Psoas muscle (tissue), 8 donors: ENCODE measurements at regions of chr2 and their contacts with region 1.

Region 1: GRCh38 chr2:45169339-45170190 is 160.3 kb upstream of the SIX2 start:
- DNase-seq: peak; percentile 45 to 62
- ATAC-seq: peak; percentile 53 to 70 (median 57)
- H3K4me3 ChIP-seq: peak overlapping the region; percentile 82
- H3K27ac ChIP-seq: peak overlapping the region; percentile 72
- H3K4me1 ChIP-seq: peaks cover 11% of the 10 kb centered on the region
- H3K27me3 ChIP-seq: peaks cover 0 to 7% (median 0%) of the 10 kb centered on the region in 3 donors
- CTCF ChIP-seq: no peak

Region 2: GRCh38 chr2:44981136-44982108 is 188.1 kb before region 1 on chr2:
- intact Hi-C with region 1: loop called in 1 of 2 experiments (anchors 10 kb)
- DNase-seq: peak; percentile 71 to 84
- ATAC-seq: peak; percentile 84 to 99 (median 90)
- H3K4me3 ChIP-seq: no peak overlapping the region
- H3K27ac ChIP-seq: no peak overlapping the region
- H3K4me1 ChIP-seq: no peaks in the 10 kb centered on the region
- H3K27me3 ChIP-seq: no peaks in the 10 kb centered on the region
- CTCF ChIP-seq: peak; percentile 91

Region 3: GRCh38 chr2:45072064-45072861 is 97.3 kb before region 1 on chr2:
- intact Hi-C with region 1: no loop called
- DNase-seq: no peak
- ATAC-seq: no peak
- H3K4me3 ChIP-seq: no peak overlapping the region
- H3K27ac ChIP-seq: no peak overlapping the region
- H3K4me1 ChIP-seq: peaks cover 9% of the 10 kb centered on the region
- H3K27me3 ChIP-seq: no peaks in the 10 kb centered on the region
- CTCF ChIP-seq: no peak

Region 4: GRCh38 chr2:45229411-45229810 is 59.8 kb after region 1 on chr2:
- intact Hi-C with region 1: loop called in 1 of 2 experiments (anchors 5 kb)
- DNase-seq: no peak
- ATAC-seq: no peak
- H3K4me3 ChIP-seq: no peak overlapping the region
- H3K27ac ChIP-seq: no peak overlapping the region
- H3K4me1 ChIP-seq: peaks cover 12% of the 10 kb centered on the region
- H3K27me3 ChIP-seq: no peaks in the 10 kb centered on the region
- CTCF ChIP-seq: no peak

Region 5: DNA sequence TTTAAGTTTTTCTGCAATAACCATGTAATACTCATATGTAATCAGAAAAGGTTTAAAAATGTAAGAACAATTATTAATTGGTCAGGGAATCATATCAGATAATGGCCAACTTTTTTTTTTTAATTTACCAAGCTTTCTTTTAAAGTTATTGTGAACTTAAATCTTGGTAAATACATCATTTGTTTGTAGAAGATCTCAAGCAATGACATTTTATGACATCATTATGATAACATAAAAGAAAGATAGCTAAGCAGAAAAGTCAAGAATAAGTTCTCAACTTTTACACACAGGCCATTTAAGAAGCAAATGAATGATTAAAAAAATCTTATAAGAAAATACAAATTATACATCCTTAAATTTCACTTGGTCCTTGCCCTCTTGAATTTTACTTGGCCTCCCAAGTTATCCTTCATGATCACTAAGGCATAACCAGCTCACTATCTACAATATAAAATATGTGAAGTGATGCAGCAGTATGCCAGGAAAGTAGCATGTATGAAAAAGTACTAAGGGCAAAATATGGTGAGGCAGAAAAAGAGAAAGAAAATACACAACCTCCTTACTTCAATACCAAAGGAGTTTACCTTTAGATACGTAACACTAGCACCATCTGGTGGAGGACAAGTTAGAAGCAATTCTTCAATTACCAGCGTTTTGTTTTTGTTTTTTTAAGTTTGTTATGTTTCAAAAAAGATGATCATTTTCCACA is 324.9 kb after region 1 on chr2:
- intact Hi-C with region 1: loop called in 1 of 2 experiments (anchors 10 kb)
- DNase-seq: no peak
- ATAC-seq: peak; percentile 42 to 76 (median 54)
- H3K4me3 ChIP-seq: no peak overlapping the region
- H3K27ac ChIP-seq: no peak overlapping the region
- H3K4me1 ChIP-seq: no peaks in the 10 kb centered on the region
- H3K27me3 ChIP-seq: no peaks in the 10 kb centered on the region
- CTCF ChIP-seq: peak; percentile 86